ENCODE measurements at regions of chr19 and their contacts with region 1.

Region 1: GRCh38 chr19:5891938-5892771 is 11.4 kb downstream of the NDUFA11 start:
- DNase-seq: peak in 3 of 6 donors; percentile 46 to 73 (median 48)
- ATAC-seq: peak; percentile 57 to 92 (median 80)
- H3K4me3 ChIP-seq: no peak overlapping the region
- H3K27ac ChIP-seq: no peak overlapping the region
- H3K4me1 ChIP-seq: no peaks in the 10 kb centered on the region
- H3K27me3 ChIP-seq: no peaks in the 10 kb centered on the region
- CTCF ChIP-seq: peak; percentile 38 to 68 (median 55)

Region 2: GRCh38 chr19:5805465-5806132 is 86.6 kb before region 1 on chr19:
- intact Hi-C with region 1: loop called in 2 of 3 experiments (anchors 5 kb)
- DNase-seq: peak; percentile 75 to 94 (median 90)
- ATAC-seq: peak; percentile 62 to 73 (median 67)
- H3K4me3 ChIP-seq: peak overlapping the region; percentile 30 to 61 (median 54)
- H3K27ac ChIP-seq: peak overlapping the region; percentile 33 to 78 (median 65)
- H3K4me1 ChIP-seq: peaks cover 0 to 10% (median 0%) of the 10 kb centered on the region in 3 donors
- H3K27me3 ChIP-seq: no peaks in the 10 kb centered on the region
- CTCF ChIP-seq: peak; percentile 76 to 85 (median 80)

Region 3: GRCh38 chr19:5977785-5978605 is 85.8 kb after region 1 on chr19 and contains the start of gene RANBP3:
- intact Hi-C with region 1: no loop called
- DNase-seq: peak; percentile 98 to 100 (median 99)
- ATAC-seq: peak; percentile 94 to 98 (median 96)
- H3K4me3 ChIP-seq: peak within 1 kb of the TSS; percentile 92 to 99 (median 98)
- H3K27ac ChIP-seq: peak within 1 kb of the TSS; percentile 57 to 90 (median 77)
- H3K4me1 ChIP-seq: peaks cover 16 to 27% (median 20%) of the 10 kb centered on the region in 3 donors
- H3K27me3 ChIP-seq: no peaks in the 10 kb centered on the region
- CTCF ChIP-seq: no peak
- total RNA-seq, gene RANBP3: 27.6 to 42.2 (median 34.7) TPM